ENCODE measurements at regions of chr3 and their contacts with region 1.

Region 1: DNA sequence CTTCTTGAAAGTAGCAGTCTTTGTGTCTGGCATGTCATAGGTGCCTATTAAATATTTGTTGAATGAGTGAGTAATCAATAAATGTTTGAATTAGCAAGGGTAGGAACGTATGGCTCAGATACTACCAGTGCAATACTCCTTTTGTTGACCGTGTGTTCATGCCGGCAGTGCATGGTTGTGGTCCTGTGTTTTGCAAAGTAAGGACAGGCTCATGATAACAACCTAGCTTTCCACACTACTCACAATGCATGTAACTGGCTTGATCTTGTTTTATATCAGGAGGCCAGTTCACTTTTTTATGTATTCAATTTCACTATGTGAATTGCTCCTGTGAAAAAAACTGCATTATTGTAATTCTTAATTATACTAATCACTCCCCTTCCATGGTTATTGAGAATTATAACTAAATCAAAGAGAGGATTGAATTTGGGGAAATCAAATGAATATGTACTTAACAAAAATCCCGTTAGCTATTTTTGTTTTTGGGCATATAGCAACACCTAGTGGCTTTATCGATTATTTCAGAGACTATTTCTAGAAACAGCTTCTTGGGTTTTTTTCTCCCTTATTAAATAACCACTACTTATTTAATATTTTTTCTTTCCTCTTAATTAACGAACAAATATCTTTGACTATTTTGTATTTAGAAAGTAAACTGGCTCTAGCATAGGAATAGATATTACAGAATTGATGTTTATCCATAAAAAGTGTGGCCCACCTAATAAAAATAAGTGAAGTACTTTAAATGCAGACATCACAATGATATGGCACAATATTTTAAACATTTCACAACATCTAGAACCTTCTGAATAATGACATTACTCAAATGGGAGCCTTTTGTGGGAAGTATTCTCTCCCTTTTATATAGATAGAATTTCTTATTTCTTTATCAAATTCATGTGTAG is 218.5 kb downstream of the BBX start:
- DNase-seq: peak; percentile 35
- H3K4me3 ChIP-seq: no peak overlapping the region
- H3K27ac ChIP-seq: no peak overlapping the region
- H3K4me1 ChIP-seq: no peaks in the 10 kb centered on the region
- CTCF ChIP-seq: peak; percentile 79

Region 2: DNA sequence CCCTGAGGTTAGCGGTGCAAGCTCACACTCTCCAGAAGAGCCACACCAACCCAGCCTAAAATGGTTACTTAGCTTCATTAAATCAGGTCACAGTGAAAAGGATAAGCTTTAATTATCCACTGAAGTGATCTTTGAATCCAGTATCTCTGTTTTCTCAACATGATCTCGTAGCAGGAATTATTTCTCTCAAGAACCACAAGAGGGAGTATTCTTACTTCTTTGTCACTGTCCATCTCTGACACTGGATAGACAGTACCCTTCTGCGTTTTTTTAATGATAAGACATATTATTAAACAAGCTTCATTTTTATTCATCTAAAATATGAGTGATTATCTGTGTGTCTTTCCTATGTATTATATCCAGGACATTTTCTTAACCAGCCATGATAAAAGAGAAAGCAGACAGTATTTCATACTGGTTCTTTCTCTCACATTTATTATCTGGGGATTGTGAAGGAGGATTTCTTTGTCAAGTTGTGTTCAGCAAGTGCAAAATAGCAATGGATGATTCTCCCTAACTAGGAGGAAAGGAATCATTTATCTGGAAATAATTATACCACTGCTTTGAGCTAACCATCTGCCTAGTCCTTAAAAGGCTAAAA is 469.4 kb before region 1 on chr3:
- CTCF ChIA-PET with region 1: no interaction called
- POLR2A ChIA-PET with region 1: no interaction called
- intact Hi-C with region 1: loop called (anchors 10 kb)
- DNase-seq: peak; percentile 66
- H3K4me3 ChIP-seq: no peak overlapping the region
- H3K27ac ChIP-seq: no peak overlapping the region
- H3K4me1 ChIP-seq: no peaks in the 10 kb centered on the region
- CTCF ChIP-seq: peak; percentile 92

Region 3: DNA sequence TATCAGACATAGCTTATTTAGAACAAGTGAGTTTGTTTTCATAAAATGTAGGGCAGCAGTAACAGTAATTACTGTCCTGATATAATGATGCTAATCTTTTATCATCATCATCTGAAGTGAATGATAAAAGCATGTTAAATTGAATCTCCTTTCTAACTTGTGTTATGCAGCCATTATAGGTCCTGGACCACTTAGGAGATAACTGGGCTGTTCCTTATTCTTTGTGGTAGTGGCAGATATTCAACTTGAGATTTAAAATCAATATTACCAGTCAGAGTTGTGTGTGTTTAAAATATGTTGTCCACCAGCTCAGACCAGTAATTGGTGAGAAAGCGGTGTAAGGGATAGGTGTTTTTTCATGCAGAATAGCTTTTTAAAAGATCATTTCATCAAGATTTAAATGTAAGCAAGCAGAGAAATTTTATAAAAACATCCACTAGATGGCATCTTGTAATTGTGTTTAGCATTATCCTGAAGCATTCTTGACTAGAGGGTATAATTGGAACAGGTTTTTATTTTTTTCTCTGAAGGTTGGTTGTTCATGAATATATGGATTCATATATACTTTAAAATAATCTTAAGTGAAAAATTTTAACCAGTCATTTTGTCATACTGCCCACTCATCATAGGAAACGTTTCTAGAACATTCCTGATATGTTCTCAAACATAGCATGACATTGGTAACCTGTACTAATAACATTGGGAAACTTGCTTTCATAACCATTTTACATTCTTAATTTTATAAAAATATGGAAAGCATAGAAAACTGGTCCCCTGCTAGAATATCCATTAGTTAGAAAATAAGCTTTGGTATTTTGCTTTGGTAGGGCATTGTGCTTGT is 64.6 kb before region 1 on chr3:
- CTCF ChIA-PET with region 1: no interaction called
- POLR2A ChIA-PET with region 1: no interaction called
- intact Hi-C with region 1: loop called (anchors 5 kb)
- DNase-seq: peak; percentile 63
- H3K4me3 ChIP-seq: no peak overlapping the region
- H3K27ac ChIP-seq: no peak overlapping the region
- H3K4me1 ChIP-seq: peaks cover 26% of the 10 kb centered on the region
- CTCF ChIP-seq: peak; percentile 90

Region 4: GRCh38 chr3:107727102-107727501 is 14.1 kb before region 1 on chr3:
- CTCF ChIA-PET with region 1: no interaction called
- POLR2A ChIA-PET with region 1: interaction called, 10 read pairs
- intact Hi-C with region 1: no loop called
- DNase-seq: no peak
- H3K4me3 ChIP-seq: no peak overlapping the region
- H3K27ac ChIP-seq: no peak overlapping the region
- H3K4me1 ChIP-seq: no peaks in the 10 kb centered on the region
- CTCF ChIP-seq: no peak

Measured in OCI-LY7 (cell line).